Esophagus muscularis mucosa (tissue), 4 donors: ENCODE measurements at regions of chr4 and their contacts with region 1.

Region 1: GRCh38 chr4:139639654-139640053 is 26.0 kb upstream of the MGST2 start:
- DNase-seq: no peak
- H3K4me3 ChIP-seq: no peak overlapping the region
- H3K27ac ChIP-seq: no peak overlapping the region
- H3K4me1 ChIP-seq: no peaks in the 10 kb centered on the region
- H3K27me3 ChIP-seq: no peaks in the 10 kb centered on the region
- CTCF ChIP-seq: no peak
- EP300 ChIP-seq: no peak
- POLR2A ChIP-seq: no peak

Region 2: GRCh38 chr4:139453371-139454110 is 186.1 kb before region 1 on chr4:
- intact Hi-C with region 1: no loop called
- DNase-seq: peak; percentile 99
- H3K4me3 ChIP-seq: peak overlapping the region; percentile 76 to 93 (median 81)
- H3K27ac ChIP-seq: peak overlapping the region; percentile 92 to 99 (median 96)
- H3K4me1 ChIP-seq: peaks cover 36 to 50% (median 49%) of the 10 kb centered on the region in 4 donors
- H3K27me3 ChIP-seq: no peaks in the 10 kb centered on the region
- CTCF ChIP-seq: peak in 1 of 3 experiments; percentile 7
- EP300 ChIP-seq: no peak
- POLR2A ChIP-seq: peak; percentile 63

Region 3: GRCh38 chr4:139484783-139485318 is 154.8 kb before region 1 on chr4:
- intact Hi-C with region 1: loop called (anchors 5 kb)
- DNase-seq: no peak
- H3K4me3 ChIP-seq: no peak overlapping the region
- H3K27ac ChIP-seq: no peak overlapping the region
- H3K4me1 ChIP-seq: peaks cover 0 to 5% (median 1%) of the 10 kb centered on the region in 4 donors
- H3K27me3 ChIP-seq: no peaks in the 10 kb centered on the region
- CTCF ChIP-seq: no peak
- EP300 ChIP-seq: no peak
- POLR2A ChIP-seq: no peak